Adrenal gland (tissue), 19 donors: ENCODE measurements at regions of chr6 and their contacts with region 1.

Region 1: DNA sequence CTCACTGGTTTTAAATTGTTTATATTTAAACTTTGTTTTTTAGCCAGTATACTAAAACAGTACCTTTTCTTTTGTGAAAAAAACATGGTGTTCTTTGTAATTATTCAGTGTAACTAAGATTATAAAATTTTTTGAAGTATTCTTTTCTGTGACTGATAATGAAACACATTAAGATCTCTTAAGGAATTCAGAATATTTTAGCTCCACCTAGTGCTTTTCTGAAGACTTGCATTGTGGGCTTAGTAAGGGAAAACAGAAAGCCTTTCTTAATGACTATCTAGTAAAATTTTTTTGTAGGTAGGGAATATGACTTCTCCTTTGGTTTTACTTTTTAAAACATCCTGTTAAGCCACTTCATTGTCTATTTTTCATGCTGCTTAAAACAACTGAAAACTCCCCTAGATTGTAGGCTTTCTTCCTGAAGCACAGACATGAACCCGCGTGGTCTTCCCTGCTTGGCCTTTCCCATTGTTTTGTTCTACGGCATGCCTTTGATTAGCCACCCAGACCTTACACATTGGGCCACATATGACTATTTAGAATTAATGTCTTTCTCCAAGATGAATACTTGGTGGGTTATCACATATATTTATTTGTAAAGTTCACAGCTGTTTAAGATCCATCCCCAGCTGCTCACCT is 72.1 kb downstream of the AFDN start:
- DNase-seq: no peak
- H3K4me3 ChIP-seq: no peak overlapping the region
- H3K27ac ChIP-seq: no peak overlapping the region
- H3K4me1 ChIP-seq: no peaks in the 10 kb centered on the region
- H3K27me3 ChIP-seq: no peaks in the 10 kb centered on the region
- CTCF ChIP-seq: peak; percentile 57 to 86 (median 74)
- POLR2A ChIP-seq: no peak

Region 2: GRCh38 chr6:167479901-167480648 is 418.7 kb before region 1 on chr6:
- intact Hi-C with region 1: loop called in 1 of 2 experiments (anchors 10 kb)
- DNase-seq: peak in 1 of 7 donors; percentile 29
- H3K4me3 ChIP-seq: no peak overlapping the region
- H3K27ac ChIP-seq: peak overlapping the region in 1 of 5 donors; percentile 7
- H3K4me1 ChIP-seq: no peaks in the 10 kb centered on the region
- H3K27me3 ChIP-seq: no peaks in the 10 kb centered on the region
- CTCF ChIP-seq: no peak
- POLR2A ChIP-seq: no peak

Region 3: GRCh38 chr6:167493976-167494697 is 404.7 kb before region 1 on chr6:
- intact Hi-C with region 1: loop called in 1 of 2 experiments (anchors 10 kb)
- DNase-seq: peak in 1 of 7 donors; percentile 45
- H3K4me3 ChIP-seq: no peak overlapping the region
- H3K27ac ChIP-seq: peak overlapping the region in 1 of 5 donors; percentile 38
- H3K4me1 ChIP-seq: no peaks in the 10 kb centered on the region
- H3K27me3 ChIP-seq: no peaks in the 10 kb centered on the region
- CTCF ChIP-seq: no peak
- POLR2A ChIP-seq: no peak

Region 4: DNA sequence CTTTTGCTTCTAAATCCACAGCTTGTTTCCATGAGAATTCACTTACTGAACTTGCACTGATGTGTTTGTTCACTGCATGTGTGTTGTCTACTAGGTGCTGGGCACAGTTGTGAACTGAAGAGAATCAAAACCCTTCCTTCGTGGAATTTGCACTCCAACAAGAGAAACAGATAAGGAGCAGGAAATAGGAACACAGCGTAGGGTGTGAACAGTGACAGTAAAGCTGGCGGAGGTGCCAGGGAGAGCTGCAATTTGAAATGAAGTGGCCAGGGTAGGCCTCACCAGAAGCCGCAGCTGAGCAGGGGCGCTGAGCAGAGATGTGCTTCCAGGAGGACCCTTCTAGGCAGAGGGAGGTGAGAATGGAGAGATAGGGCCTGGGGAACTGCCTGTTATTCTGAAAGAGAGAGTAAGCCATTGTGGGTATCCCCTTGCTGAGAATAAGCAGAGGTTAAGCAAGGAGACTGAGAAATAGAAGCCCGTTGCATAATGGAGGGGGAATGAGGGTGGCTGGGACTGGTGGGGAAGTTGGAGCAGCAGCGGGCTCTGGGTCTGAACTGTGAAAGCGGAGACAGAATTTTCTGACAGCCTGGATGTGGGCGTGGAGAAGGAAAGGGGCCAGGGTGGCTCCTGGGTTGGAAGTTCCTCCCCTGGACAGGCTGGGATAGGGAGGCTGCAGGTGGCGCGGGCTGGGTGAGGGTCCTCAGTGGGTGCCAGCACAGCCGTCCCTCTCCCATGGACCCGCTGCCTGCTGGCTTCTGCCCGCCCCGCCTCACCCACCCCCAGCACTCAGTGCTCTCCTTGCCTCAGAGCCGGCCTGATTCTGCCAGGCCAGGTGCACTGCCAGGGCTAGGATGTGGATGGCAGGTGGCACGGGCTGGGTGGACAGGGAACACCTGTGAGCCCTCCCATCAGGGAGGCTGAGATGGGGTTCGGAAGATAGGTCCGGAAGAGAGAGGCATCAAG is 186.7 kb before region 1 on chr6:
- intact Hi-C with region 1: no loop called
- DNase-seq: peak in 1 of 7 donors; percentile 15
- H3K4me3 ChIP-seq: no peak overlapping the region
- H3K27ac ChIP-seq: no peak overlapping the region
- H3K4me1 ChIP-seq: no peaks in the 10 kb centered on the region
- H3K27me3 ChIP-seq: peaks cover 5% of the 10 kb centered on the region
- CTCF ChIP-seq: no peak
- POLR2A ChIP-seq: no peak